ENCODE measurements at regions of chr17 and their contacts with region 1.

Region 1: GRCh38 chr17:45135192-45135977 is at the start of gene ACBD4:
- DNase-seq: peak; percentile 98
- ATAC-seq: peak; percentile 91
- H3K4me3 Mint-ChIP-seq: peak within 1 kb of the TSS; percentile 83
- H3K27ac Mint-ChIP-seq: peak within 1 kb of the TSS; percentile 85
- H3K4me1 Mint-ChIP-seq: peaks cover 19% of the 10 kb centered on the region
- H3K27me3 Mint-ChIP-seq: peaks cover 9% of the 10 kb centered on the region
- total RNA-seq, gene ACBD4: 14.9 to 20.6 TPM

Region 2: DNA sequence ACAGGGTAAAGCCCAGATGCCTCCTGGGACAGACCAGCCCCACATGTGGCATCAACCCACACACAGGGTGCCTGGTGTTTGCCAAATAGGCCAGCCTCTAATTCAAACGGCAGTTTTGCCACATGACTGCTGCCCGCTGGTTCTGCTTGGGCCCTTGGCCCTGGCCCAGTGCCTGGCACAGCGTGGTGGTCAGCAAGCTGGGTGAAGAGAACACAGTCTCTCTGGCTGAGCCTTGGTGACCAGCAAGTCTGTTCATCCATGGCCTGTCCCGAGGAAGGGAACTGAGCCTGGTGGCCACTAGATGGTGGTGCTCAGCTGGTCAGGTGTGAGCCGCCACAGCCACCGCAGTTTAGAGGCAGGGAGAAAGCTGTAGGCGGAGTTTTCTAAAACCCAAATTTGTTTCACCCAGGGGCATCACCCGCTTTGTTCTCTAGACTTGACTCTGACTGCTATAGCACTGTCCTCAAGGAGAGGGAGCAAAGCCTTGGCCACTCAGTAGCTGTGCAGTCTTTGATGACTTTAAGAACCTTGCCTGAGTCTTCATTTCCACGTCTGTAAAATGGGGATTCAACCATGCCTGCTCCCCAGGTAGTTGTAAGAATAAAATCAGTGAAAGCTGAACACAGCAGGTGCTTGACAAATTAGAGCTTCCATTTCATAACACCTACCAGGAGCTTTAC is 215.4 kb before region 1 on chr17:
- CTCF ChIA-PET with region 1: interaction called, 18 read pairs
- DNase-seq: peak; percentile 80
- ATAC-seq: peak; percentile 85
- H3K4me3 Mint-ChIP-seq: no peak overlapping the region
- H3K27ac Mint-ChIP-seq: no peak overlapping the region
- H3K4me1 Mint-ChIP-seq: peaks cover 4% of the 10 kb centered on the region
- H3K27me3 Mint-ChIP-seq: peaks cover 26% of the 10 kb centered on the region

Region 3: DNA sequence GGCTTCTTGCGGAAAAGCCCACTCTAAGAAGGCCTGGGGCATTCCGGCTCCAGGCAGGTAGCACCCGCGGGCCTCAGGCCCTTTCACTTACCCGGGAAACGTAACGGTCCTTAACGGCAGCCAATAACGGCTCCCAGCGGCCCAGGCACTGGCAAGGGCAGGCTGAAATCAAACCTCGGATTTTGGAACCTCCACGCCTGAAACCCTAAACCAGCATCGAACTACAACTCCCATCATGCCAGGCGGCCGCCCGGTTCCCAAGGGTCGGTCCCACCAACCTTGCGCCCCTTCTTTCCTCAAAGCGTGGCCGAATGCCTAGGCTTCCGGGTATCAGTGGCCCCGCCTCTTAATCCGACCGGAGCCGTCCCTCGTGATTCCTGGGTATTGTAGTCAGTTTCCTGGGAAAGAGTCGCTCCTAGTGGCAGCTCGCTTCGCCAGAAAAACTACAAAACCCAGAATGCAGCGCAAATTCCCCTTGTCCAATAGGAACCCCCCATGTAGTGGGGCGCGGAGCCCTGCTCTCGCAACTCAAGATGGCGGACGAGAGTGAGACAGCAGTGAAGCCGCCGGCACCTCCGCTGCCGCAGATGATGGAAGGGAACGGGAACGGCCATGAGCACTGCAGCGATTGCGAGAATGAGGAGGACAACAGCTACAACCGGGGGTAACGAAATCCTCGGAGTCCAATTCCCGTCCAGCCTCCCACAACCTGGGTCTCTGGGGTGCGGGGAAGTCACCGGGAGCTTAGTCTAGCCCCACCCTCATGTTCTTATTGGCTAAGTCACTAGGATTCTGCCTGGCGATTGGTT is 74.4 kb before region 1 on chr17 and contains the start of gene NMT1:
- CTCF ChIA-PET with region 1: interaction called, 13 read pairs
- DNase-seq: peak; percentile 99
- ATAC-seq: peak; percentile 92
- H3K4me3 Mint-ChIP-seq: peak within 1 kb of the TSS; percentile 90
- H3K27ac Mint-ChIP-seq: peak within 1 kb of the TSS; percentile 92
- H3K4me1 Mint-ChIP-seq: peaks cover 43% of the 10 kb centered on the region
- H3K27me3 Mint-ChIP-seq: no peaks in the 10 kb centered on the region
- total RNA-seq, gene NMT1: 136 to 148 TPM

Region 4: GRCh38 chr17:45123930-45124796 is 11.2 kb before region 1 on chr17:
- CTCF ChIA-PET with region 1: interaction called, 11 read pairs
- DNase-seq: peak; percentile 62
- ATAC-seq: peak; percentile 77
- H3K4me3 Mint-ChIP-seq: no peak overlapping the region
- H3K27ac Mint-ChIP-seq: peak overlapping the region; percentile 32
- H3K4me1 Mint-ChIP-seq: peaks cover 5% of the 10 kb centered on the region
- H3K27me3 Mint-ChIP-seq: peaks cover 10% of the 10 kb centered on the region

Region 5: DNA sequence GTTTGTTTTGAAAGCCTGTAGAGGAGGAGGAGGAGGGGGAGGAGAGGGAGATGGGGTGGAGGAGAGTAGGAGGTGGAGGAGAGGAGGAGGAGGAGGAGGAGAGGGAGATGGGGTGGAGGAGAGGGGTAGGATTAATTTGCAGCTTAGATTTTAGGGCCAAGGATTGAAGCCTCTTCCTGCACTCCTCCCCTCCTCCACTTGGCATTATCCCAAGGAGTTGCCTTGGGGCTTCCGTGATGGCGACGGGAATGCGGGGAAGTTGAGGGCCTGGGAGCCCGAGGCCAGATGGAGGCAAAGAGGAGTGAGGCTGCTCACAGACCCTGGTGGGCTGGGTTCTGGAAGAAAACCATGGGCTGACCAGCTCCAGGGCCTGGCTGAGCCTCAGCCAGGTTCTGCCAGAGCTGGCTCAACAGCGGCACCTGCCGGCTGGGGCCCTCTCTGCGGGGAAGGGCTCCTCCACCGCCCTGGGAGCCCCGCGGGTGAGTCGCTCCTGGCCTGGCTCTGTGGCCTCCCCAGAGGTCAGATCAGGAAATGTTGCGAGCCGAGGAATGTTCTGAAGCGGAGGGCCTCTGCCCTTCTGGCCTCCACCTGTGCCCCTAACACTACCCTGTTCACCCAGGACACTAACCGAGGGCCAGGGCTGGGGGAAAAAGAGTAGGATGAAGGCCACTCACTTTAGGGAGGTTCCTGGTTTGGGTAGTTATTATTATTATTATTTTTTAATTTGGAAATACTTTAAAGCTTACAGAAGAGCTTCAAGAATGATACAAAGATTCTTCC is 62.4 kb after region 1 on chr17:
- CTCF ChIA-PET with region 1: interaction called, 401 read pairs
- DNase-seq: peak; percentile 90
- ATAC-seq: peak; percentile 100
- H3K4me3 Mint-ChIP-seq: no peak overlapping the region
- H3K27ac Mint-ChIP-seq: peak overlapping the region; percentile 19
- H3K4me1 Mint-ChIP-seq: peaks cover 6% of the 10 kb centered on the region
- H3K27me3 Mint-ChIP-seq: no peaks in the 10 kb centered on the region

Region 6: DNA sequence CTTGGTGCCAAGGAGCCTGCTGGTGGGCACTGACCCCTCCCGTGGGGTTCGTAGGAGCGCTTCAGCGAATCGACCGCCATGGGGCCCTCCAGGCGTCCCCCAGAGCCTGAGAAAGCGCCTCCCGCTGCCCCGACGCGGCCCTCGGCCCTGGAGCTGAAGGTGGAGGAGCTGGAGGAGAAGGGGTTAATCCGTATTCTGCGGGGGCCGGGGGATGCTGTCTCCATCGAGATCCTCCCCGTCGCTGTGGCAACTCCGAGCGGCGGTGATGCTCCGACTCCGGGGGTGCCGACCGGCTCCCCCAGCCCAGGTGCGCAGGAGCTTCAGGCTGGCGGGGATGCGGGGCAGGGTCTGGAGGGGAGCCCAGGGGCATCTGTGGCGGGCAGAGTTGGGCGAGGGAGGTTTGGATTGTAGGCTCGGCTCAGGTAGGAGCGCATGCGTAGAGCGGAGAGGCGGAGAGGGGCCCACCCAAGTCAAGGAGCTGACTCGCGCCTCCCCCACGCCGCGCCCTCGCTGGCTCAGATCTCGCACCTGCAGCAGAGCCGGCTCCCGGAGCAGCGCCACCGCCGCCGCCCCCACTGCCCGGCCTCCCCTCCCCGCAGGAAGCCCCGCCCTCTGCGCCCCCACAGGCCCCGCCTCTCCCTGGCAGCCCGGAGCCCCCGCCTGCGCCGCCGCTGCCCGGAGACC is 106.1 kb after region 1 on chr17:
- CTCF ChIA-PET with region 1: interaction called, 16 read pairs
- DNase-seq: no peak
- ATAC-seq: no peak
- H3K4me3 Mint-ChIP-seq: no peak overlapping the region
- H3K27ac Mint-ChIP-seq: no peak overlapping the region
- H3K4me1 Mint-ChIP-seq: peaks cover 33% of the 10 kb centered on the region
- H3K27me3 Mint-ChIP-seq: no peaks in the 10 kb centered on the region

Region 7: GRCh38 chr17:45385331-45385997 is 250.1 kb after region 1 on chr17:
- CTCF ChIA-PET with region 1: interaction called, 19 read pairs
- DNase-seq: peak; percentile 92
- ATAC-seq: peak; percentile 97
- H3K4me3 Mint-ChIP-seq: no peak overlapping the region
- H3K27ac Mint-ChIP-seq: no peak overlapping the region
- H3K4me1 Mint-ChIP-seq: peaks cover 25% of the 10 kb centered on the region
- H3K27me3 Mint-ChIP-seq: peaks cover 7% of the 10 kb centered on the region